ENCODE measurements at regions of chr15 and their contacts with region 1.

Region 1: GRCh38 chr15:88620995-88621772 is at the start of gene AEN:
- DNase-seq: peak; percentile 94 to 97 (median 95)
- H3K4me3 ChIP-seq: peak within 1 kb of the TSS; percentile 79 to 92
- H3K4me3 Mint-ChIP-seq: peak within 1 kb of the TSS; percentile 88 to 96 (median 92)
- H3K27ac ChIP-seq: peak within 1 kb of the TSS; percentile 82
- H3K27ac Mint-ChIP-seq: peak within 1 kb of the TSS; percentile 89 to 97 (median 96)
- H3K4me1 ChIP-seq: peaks cover 49% of the 10 kb centered on the region
- H3K4me1 Mint-ChIP-seq: peaks cover 30 to 54% (median 42%) of the 10 kb centered on the region in 4 donors
- H3K27me3 ChIP-seq: no peaks in the 10 kb centered on the region
- H3K27me3 Mint-ChIP-seq: peaks cover 0 to 2% of the 10 kb centered on the region in 2 donors
- total RNA-seq, gene AEN: 54.5 to 56.8 TPM

Region 2: DNA sequence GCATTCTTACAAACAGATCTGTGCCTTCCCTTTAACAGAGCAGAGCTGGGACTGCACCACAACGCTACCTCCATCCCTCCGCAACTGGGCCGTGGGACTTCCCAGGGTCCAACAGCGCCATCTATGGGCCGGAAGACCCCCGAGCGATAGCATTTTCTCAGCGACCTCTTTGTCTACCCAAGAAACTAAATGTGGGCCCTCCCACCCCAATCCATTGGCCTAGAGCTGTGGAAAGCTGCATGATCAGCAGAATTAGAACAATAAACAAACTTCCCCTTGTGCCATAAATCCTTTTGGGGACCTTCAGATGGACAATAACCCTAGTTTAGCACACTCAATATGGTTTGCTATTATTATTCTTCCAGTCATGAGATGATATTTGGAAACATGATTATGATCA is 289.9 kb before region 1 on chr15:
- CTCF ChIA-PET with region 1: no interaction called
- POLR2A ChIA-PET with region 1: no interaction called
- intact Hi-C with region 1: no loop called
- DNase-seq: no peak
- H3K4me3 ChIP-seq: no peak overlapping the region
- H3K4me3 Mint-ChIP-seq: no peak overlapping the region
- H3K27ac ChIP-seq: no peak overlapping the region
- H3K27ac Mint-ChIP-seq: peak overlapping the region in 1 of 7 donors; percentile 58
- H3K4me1 ChIP-seq: no peaks in the 10 kb centered on the region
- H3K4me1 Mint-ChIP-seq: no peaks in the 10 kb centered on the region
- H3K27me3 ChIP-seq: no peaks in the 10 kb centered on the region
- H3K27me3 Mint-ChIP-seq: peaks cover 18 to 20% of the 10 kb centered on the region in 2 donors

Region 3: GRCh38 chr15:88467073-88467934 is 153.9 kb before region 1 on chr15 and contains the starts of genes MRPL46 and MRPS11:
- CTCF ChIA-PET with region 1: interaction called, 5 read pairs
- POLR2A ChIA-PET with region 1: interaction called, 5 read pairs
- intact Hi-C with region 1: loop called (anchors 5 kb)
- DNase-seq: peak; percentile 89 to 93 (median 90)
- H3K4me3 ChIP-seq: peak within 1 kb of the TSS; percentile 87 to 90
- H3K4me3 Mint-ChIP-seq: peak within 1 kb of the TSS; percentile 96 to 99 (median 98)
- H3K27ac ChIP-seq: peak within 1 kb of the TSS; percentile 93
- H3K27ac Mint-ChIP-seq: peak within 1 kb of the TSS; percentile 98 to 100 (median 99)
- H3K4me1 ChIP-seq: peaks cover 29% of the 10 kb centered on the region
- H3K4me1 Mint-ChIP-seq: peaks cover 15 to 38% (median 30%) of the 10 kb centered on the region in 4 donors
- H3K27me3 ChIP-seq: no peaks in the 10 kb centered on the region
- H3K27me3 Mint-ChIP-seq: no peaks in the 10 kb centered on the region
- total RNA-seq, gene MRPL46: 25.9 to 28.7 TPM
- total RNA-seq, gene MRPS11: 27.5 to 35.0 TPM

Region 4: GRCh38 chr15:88638626-88639372 is 17.6 kb after region 1 on chr15 and contains the start of gene ISG20:
- CTCF ChIA-PET with region 1: interaction called, 60 read pairs
- POLR2A ChIA-PET with region 1: interaction called, 45 read pairs
- intact Hi-C with region 1: no loop called
- DNase-seq: peak; percentile 97 to 100 (median 99)
- H3K4me3 ChIP-seq: peak within 1 kb of the TSS; percentile 55 to 94
- H3K4me3 Mint-ChIP-seq: peak within 1 kb of the TSS; percentile 88 to 98 (median 95)
- H3K27ac ChIP-seq: peak within 1 kb of the TSS; percentile 100
- H3K27ac Mint-ChIP-seq: peak within 1 kb of the TSS; percentile 89 to 100 (median 99)
- H3K4me1 ChIP-seq: peaks cover 96% of the 10 kb centered on the region
- H3K4me1 Mint-ChIP-seq: peaks cover 55 to 86% (median 74%) of the 10 kb centered on the region in 4 donors
- H3K27me3 ChIP-seq: no peaks in the 10 kb centered on the region
- H3K27me3 Mint-ChIP-seq: no peaks in the 10 kb centered on the region
- total RNA-seq, gene ISG20: 144 to 153 TPM

Region 5: DNA sequence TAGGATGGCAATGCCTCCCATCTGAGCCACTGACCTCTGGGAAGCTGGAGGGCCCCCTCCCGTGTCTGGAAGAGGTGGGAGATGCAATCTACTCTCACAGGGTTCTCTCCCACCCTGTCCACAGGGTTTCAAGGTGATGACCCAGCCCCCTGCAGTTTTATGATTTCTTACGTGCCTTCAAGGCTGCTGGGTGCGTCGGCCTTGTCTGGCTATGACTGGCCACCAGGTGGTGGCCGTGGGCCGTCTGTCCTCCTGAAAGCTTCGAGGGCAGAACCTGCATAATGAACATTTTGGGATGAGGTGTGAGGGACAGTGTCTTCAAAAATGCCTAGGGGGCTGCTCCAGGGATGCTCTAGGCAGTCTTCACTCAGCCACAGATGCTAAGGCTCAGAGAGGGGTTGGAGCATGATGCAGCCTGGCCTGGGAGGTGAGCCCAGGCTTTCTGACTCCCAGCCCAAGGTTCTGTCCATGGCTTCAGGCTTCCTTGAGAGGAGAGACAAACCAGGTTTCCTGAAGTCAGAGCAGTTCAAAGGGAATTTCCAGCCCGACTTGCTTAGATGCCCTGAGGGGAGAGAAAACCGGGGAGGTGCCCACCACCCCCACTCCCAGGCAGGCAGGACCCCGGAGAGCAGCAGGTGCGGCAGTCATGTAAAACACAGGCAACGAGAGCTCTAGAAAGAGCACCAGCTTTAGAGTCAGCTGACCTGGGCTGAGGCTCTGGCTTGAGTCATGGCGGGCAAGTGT is 36.3 kb after region 1 on chr15:
- CTCF ChIA-PET with region 1: interaction called, 95 read pairs
- POLR2A ChIA-PET with region 1: interaction called, 113 read pairs
- intact Hi-C with region 1: no loop called
- DNase-seq: no peak
- H3K4me3 ChIP-seq: no peak overlapping the region
- H3K4me3 Mint-ChIP-seq: peak overlapping the region in 1 of 8 donors; percentile 15
- H3K27ac ChIP-seq: no peak overlapping the region
- H3K27ac Mint-ChIP-seq: peak overlapping the region; percentile 37 to 86 (median 84)
- H3K4me1 ChIP-seq: peaks cover 60% of the 10 kb centered on the region
- H3K4me1 Mint-ChIP-seq: peaks cover 38 to 82% (median 58%) of the 10 kb centered on the region in 4 donors
- H3K27me3 ChIP-seq: no peaks in the 10 kb centered on the region
- H3K27me3 Mint-ChIP-seq: no peaks in the 10 kb centered on the region

Region 6: DNA sequence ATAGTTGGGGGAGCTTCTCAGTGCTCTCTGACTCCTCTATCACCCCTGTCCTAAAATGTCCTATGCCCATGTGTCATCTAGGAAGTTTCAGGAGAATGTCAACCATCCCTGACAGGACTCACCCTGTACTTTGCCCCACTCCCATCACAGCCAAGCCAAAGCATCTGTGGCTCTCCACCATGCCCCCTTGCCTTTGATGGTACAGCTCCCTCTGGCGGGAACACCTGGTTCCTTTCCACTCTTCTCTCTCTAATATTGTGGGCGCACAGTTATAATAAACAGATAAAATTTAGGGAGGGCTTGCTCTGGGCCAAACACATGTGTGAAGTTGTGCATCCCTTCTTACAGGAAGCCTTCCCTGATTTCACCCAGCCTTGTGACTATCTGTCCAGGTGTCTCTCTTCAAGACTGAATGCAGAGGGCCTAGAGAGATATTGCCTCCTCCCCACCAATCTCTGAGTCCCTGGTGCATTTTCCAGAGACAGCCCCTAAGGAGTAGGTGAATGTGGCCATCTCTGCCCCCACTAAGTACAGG is 80.4 kb after region 1 on chr15:
- CTCF ChIA-PET with region 1: no interaction called
- POLR2A ChIA-PET with region 1: interaction called, 3 read pairs
- intact Hi-C with region 1: loop called (anchors 1 kb)
- DNase-seq: peak in 3 of 5 donors; percentile 12 to 19 (median 15)
- H3K4me3 ChIP-seq: no peak overlapping the region
- H3K4me3 Mint-ChIP-seq: no peak overlapping the region
- H3K27ac ChIP-seq: no peak overlapping the region
- H3K27ac Mint-ChIP-seq: no peak overlapping the region
- H3K4me1 ChIP-seq: peaks cover 7% of the 10 kb centered on the region
- H3K4me1 Mint-ChIP-seq: peaks cover 6 to 17% (median 10%) of the 10 kb centered on the region in 4 donors
- H3K27me3 ChIP-seq: peaks cover 10% of the 10 kb centered on the region
- H3K27me3 Mint-ChIP-seq: peaks cover 13% of the 10 kb centered on the region in 2 donors

Region 7: GRCh38 chr15:88834211-88834812 is 213.1 kb after region 1 on chr15:
- CTCF ChIA-PET with region 1: interaction called, 18 read pairs
- POLR2A ChIA-PET with region 1: no interaction called
- intact Hi-C with region 1: no loop called
- DNase-seq: peak in 4 of 5 donors; percentile 9 to 23 (median 16)
- H3K4me3 ChIP-seq: no peak overlapping the region
- H3K4me3 Mint-ChIP-seq: peak overlapping the region in 1 of 8 donors; percentile 57
- H3K27ac ChIP-seq: no peak overlapping the region
- H3K27ac Mint-ChIP-seq: peak overlapping the region in 2 of 7 donors; percentile 35 to 57
- H3K4me1 ChIP-seq: no peaks in the 10 kb centered on the region
- H3K4me1 Mint-ChIP-seq: peaks cover 0 to 9% (median 3%) of the 10 kb centered on the region in 4 donors
- H3K27me3 ChIP-seq: no peaks in the 10 kb centered on the region
- H3K27me3 Mint-ChIP-seq: peaks cover 0 to under 1% of the 10 kb centered on the region in 2 donors

Region 8: GRCh38 chr15:88888719-88889118 is 267.5 kb after region 1 on chr15:
- CTCF ChIA-PET with region 1: no interaction called
- POLR2A ChIA-PET with region 1: no interaction called
- intact Hi-C with region 1: no loop called
- DNase-seq: no peak
- H3K4me3 ChIP-seq: no peak overlapping the region
- H3K4me3 Mint-ChIP-seq: no peak overlapping the region
- H3K27ac ChIP-seq: no peak overlapping the region
- H3K27ac Mint-ChIP-seq: no peak overlapping the region
- H3K4me1 ChIP-seq: peaks cover 3% of the 10 kb centered on the region
- H3K4me1 Mint-ChIP-seq: peaks cover 10 to 35% (median 12%) of the 10 kb centered on the region in 4 donors
- H3K27me3 ChIP-seq: no peaks in the 10 kb centered on the region
- H3K27me3 Mint-ChIP-seq: no peaks in the 10 kb centered on the region